Activated B cell treated with CpG ODN at 0.5 μM for 24 hours (primary cell): ENCODE measurements at regions of chr19 and their contacts with region 1.

Region 1: GRCh38 chr19:53431399-53432087 is at the start of gene ZNF761:
- DNase-seq: peak; percentile 99
- ATAC-seq: peak; percentile 98
- H3K4me3 Mint-ChIP-seq: peak within 1 kb of the TSS; percentile 96
- H3K27ac Mint-ChIP-seq: peak within 1 kb of the TSS; percentile 94
- H3K4me1 Mint-ChIP-seq: peaks cover 34% of the 10 kb centered on the region
- H3K27me3 Mint-ChIP-seq: no peaks in the 10 kb centered on the region
- CTCF ChIP-seq: no peak
- total RNA-seq, gene ZNF761: 11.1 and 13.8 TPM in 2 replicates

Region 2: DNA sequence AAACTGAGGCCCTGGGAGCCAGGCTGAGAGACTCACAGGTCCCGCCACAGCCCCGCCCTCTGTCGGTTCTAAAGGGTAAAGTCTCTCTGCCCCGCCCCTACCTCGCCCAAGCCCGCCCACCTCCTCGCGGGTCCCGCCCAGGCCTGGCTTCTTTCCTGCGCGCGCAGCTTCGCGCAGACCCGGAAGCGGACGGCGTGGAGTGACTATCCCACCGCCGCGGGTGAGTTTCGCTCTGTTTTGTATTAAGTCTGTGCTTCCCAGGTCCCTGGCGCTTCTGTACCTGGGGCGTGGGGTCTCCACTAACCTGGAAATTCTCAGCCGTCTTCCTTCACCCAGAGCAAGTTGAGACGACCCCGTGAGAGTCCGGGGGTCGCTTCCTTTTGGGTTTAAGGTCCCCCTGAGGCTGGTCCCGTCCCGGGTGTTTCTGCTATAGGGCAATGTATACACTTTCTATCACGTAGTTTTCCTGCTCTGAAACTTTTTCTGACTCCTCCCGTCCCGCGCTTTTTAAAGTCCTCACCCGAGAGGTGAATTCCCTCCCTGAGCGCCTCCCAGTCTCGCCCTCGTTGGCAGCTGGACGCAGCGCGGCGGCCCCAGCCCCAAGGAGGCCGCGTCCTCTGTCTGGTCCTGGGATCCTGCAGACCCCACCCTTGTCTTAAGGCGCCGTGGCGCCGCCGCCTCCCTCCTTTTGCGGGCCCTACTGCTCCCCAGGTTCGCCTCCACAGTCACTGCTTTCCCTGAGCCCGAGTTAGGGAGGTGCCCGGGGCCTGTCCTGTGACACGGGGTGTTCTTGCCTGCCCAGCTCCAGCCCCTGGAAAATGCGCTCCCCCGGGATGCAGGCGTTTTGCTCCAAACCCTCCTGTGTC is 36.3 kb before region 1 on chr19 and contains the start of gene ZNF765:
- CTCF ChIA-PET with region 1: no interaction called
- POLR2A ChIA-PET with region 1: interaction called, 3 read pairs
- intact Hi-C with region 1: loop called (anchors 2 kb)
- DNase-seq: peak; percentile 98
- ATAC-seq: peak; percentile 99
- H3K4me3 Mint-ChIP-seq: peak within 1 kb of the TSS; percentile 95
- H3K27ac Mint-ChIP-seq: peak within 1 kb of the TSS; percentile 90
- H3K4me1 Mint-ChIP-seq: peaks cover 29% of the 10 kb centered on the region
- H3K27me3 Mint-ChIP-seq: no peaks in the 10 kb centered on the region
- CTCF ChIP-seq: no peak
- total RNA-seq, gene ZNF765: 16.2 and 18.9 TPM in 2 replicates

Region 3: GRCh38 chr19:53467485-53468262 is 36.1 kb after region 1 on chr19 and contains the start of gene ZNF813:
- CTCF ChIA-PET with region 1: no interaction called
- POLR2A ChIA-PET with region 1: no interaction called
- intact Hi-C with region 1: loop called (anchors 1 kb)
- DNase-seq: peak; percentile 97
- ATAC-seq: peak; percentile 99
- H3K4me3 Mint-ChIP-seq: peak within 1 kb of the TSS; percentile 94
- H3K27ac Mint-ChIP-seq: peak within 1 kb of the TSS; percentile 90
- H3K4me1 Mint-ChIP-seq: peaks cover 32% of the 10 kb centered on the region
- H3K27me3 Mint-ChIP-seq: peaks cover 18% of the 10 kb centered on the region
- CTCF ChIP-seq: no peak
- total RNA-seq, gene ZNF813: 8.2 and 10.7 TPM in 2 replicates

Region 4: DNA sequence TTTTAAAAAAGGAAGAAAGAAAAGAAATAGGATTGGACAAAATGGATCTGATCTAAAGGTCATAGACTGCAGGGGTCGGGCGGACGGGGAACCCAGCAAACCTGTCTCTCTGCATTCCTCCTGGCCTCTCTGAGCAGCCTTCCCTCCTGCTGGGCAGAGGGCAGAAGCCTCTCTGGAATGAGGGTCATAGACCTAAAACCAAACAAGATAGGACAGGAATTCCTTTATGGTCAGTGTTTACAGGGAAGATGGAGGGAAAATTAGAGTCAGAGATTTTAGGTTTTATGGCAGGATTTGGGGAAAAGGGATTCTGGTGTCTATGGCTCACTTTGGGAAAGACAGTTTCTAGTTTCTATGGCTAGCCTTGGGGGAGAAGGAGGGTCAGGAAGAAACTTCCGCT is 181.2 kb after region 1 on chr19:
- CTCF ChIA-PET with region 1: no interaction called
- POLR2A ChIA-PET with region 1: no interaction called
- intact Hi-C with region 1: no loop called
- DNase-seq: no peak
- ATAC-seq: no peak
- H3K4me3 Mint-ChIP-seq: no peak overlapping the region
- H3K27ac Mint-ChIP-seq: no peak overlapping the region
- H3K4me1 Mint-ChIP-seq: no peaks in the 10 kb centered on the region
- H3K27me3 Mint-ChIP-seq: no peaks in the 10 kb centered on the region
- CTCF ChIP-seq: no peak

Region 5: DNA sequence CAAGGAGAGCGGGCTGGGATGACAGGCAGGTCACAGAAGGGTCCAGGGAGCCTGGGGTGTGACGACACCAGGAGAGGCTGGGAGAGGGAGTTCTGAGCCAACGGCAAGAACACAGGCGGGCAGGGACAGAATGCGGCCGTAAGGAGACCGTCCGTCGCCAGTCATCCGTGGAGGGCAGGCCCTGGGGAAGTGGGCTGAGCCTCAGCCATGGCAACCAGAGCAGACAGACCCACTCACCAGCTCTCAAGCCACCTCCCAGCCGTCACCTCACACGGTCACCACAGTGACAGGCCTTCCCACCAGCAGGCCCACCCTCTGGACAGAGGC is 1800.7 kb after region 1 on chr19:
- CTCF ChIA-PET with region 1: no interaction called
- POLR2A ChIA-PET with region 1: interaction called, 10 read pairs
- intact Hi-C with region 1: no loop called
- DNase-seq: no peak
- ATAC-seq: no peak
- H3K4me3 Mint-ChIP-seq: no peak overlapping the region
- H3K27ac Mint-ChIP-seq: no peak overlapping the region
- H3K4me1 Mint-ChIP-seq: no peaks in the 10 kb centered on the region
- H3K27me3 Mint-ChIP-seq: no peaks in the 10 kb centered on the region
- CTCF ChIP-seq: no peak